Activated CD8-positive, alpha-beta T cell treated with anti-CD3 and anti-CD28 coated beads for 36 hours (primary cell): ENCODE measurements at regions of chr17 and their contacts with region 1.

Region 1: DNA sequence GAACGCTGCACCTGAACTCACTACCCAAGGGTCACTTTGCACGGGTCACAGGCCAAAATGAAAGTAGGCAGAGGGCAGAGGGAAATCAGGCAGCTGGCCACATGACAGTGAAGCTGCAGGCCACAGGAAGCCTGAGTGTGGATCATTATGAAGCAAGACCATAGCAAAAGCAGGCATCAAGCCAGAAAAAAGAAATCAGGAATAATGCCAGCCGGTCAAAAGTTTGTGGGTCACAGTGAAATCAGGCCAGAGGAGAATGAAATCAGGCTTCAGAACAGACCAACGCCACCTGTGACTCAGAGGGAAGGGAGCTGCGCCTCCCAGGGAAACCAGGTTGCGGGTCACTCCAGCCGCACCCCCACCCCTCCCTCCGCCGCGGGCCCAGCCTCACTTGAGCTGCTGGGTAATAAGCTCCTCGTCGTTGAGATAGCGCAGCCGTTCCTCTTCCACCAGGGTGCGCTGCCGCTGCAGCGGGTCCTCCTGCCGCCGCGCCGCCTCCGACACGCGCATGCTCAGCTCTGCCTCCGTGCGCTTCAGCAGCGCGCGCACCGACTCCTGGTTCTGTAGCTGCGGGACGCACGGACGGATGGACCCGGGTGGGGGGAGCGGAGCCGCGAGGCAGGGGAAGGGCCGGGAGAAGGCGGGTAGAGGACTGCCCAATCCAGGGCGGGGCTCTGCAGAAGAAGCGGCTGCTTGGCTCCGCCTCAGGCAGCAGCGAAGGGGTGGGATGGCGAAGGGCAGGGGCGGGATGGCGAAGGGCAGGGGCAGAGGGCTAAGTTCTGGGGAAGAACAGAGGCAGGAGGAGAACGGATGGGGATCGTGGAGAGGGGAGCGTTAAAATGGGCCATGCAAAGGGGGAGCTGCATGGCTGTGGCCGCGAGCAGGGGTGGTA is 47.7 kb downstream of the SRCIN1 start:
- DNase-seq: peak; percentile 92
- ATAC-seq: peak; percentile 87
- H3K4me3 Mint-ChIP-seq: peak overlapping the region; percentile 75
- H3K27ac Mint-ChIP-seq: no peak overlapping the region
- H3K4me1 Mint-ChIP-seq: peaks cover 25% of the 10 kb centered on the region
- H3K27me3 Mint-ChIP-seq: peaks cover 30% of the 10 kb centered on the region
- CTCF ChIP-seq: peak; percentile 89

Region 2: GRCh38 chr17:38326996-38327792 is 230.9 kb before region 1 on chr17:
- CTCF ChIA-PET with region 1: no interaction called
- POLR2A ChIA-PET with region 1: no interaction called
- intact Hi-C with region 1: no loop called
- DNase-seq: no peak
- ATAC-seq: peak; percentile 41
- H3K4me3 Mint-ChIP-seq: no peak overlapping the region
- H3K27ac Mint-ChIP-seq: no peak overlapping the region
- H3K4me1 Mint-ChIP-seq: peaks cover 7% of the 10 kb centered on the region
- H3K27me3 Mint-ChIP-seq: no peaks in the 10 kb centered on the region
- CTCF ChIP-seq: no peak

Region 3: GRCh38 chr17:38544839-38545209 is 13.3 kb before region 1 on chr17:
- CTCF ChIA-PET with region 1: interaction called, 28 read pairs
- POLR2A ChIA-PET with region 1: interaction called, 5 read pairs
- intact Hi-C with region 1: no loop called
- DNase-seq: no peak
- ATAC-seq: no peak
- H3K4me3 Mint-ChIP-seq: no peak overlapping the region
- H3K27ac Mint-ChIP-seq: no peak overlapping the region
- H3K4me1 Mint-ChIP-seq: no peaks in the 10 kb centered on the region
- H3K27me3 Mint-ChIP-seq: peaks cover 14% of the 10 kb centered on the region
- CTCF ChIP-seq: no peak

Region 4: DNA sequence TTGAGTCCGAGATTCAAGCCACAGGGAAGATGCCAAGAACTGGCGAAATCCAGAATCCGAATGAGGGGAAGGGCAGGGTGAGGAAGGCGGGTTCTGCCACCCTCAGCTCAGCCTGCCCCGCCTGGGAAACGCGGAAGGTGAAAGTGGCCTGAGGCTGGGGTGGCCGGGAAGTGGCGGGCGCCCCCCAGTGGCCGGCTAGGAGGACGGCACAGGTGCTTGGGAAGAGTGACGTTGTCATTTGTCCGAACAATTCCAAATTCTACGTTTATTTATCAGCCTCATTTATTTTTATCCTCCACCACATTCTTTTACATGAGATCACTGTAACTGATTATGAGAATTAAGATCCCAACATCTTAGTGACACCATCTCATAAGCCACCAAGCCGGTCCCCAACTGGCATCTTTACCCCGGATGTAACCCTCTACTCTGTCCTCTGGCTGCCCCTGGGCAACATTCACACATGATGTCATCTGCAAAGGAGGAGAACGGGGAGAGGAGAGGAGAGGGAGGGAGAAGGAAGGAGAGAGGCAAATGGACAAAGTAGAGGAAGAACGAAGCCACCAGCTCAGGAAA is 26.4 kb after region 1 on chr17:
- CTCF ChIA-PET with region 1: interaction called, 241 read pairs
- POLR2A ChIA-PET with region 1: no interaction called
- intact Hi-C with region 1: no loop called
- DNase-seq: peak; percentile 69
- ATAC-seq: peak; percentile 78
- H3K4me3 Mint-ChIP-seq: no peak overlapping the region
- H3K27ac Mint-ChIP-seq: no peak overlapping the region
- H3K4me1 Mint-ChIP-seq: peaks cover 4% of the 10 kb centered on the region
- H3K27me3 Mint-ChIP-seq: peaks cover 61% of the 10 kb centered on the region
- CTCF ChIP-seq: peak; percentile 99

Region 5: DNA sequence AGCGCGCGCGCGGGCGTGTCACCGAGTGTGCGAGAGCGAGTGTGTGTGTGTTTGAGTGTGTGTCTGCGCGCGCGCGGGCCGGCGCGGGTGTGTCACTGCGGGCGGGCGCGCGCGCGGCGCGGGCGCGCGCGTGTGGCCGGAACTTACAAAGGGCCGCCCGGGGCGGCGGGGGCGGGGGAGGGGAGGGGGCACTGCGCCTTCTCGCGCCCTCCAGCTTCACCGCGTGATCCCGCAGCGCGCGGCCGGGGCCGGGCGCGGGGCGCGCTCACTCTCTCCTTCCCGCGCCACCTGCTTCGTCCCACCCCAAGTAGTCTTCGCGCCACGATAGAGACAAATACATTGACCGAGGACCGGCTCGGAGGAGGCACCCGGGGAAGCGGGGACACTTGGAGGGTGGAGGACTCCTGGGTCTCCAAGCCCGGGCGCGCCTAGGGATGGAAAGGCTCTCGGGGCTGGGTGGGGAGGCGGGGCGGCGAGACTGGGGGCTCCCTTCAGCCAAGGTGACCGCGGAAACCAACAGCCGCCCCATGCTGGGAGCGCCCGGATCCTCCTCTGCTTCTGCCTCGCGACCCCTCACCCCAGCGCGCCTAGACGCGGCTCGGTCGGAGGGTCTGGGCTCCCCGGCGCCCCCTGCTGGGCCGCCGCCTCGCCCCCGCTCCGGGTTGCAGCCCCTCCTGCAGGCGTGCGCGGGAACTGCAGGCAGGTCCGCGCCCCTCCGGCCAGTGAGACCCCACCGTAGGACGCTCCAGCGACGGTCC is 48.0 kb after region 1 on chr17 and contains the start of gene SRCIN1:
- CTCF ChIA-PET with region 1: interaction called, 47 read pairs
- POLR2A ChIA-PET with region 1: no interaction called
- intact Hi-C with region 1: no loop called
- DNase-seq: peak; percentile 75
- ATAC-seq: peak; percentile 69
- H3K4me3 Mint-ChIP-seq: peak within 1 kb of the TSS; percentile 67
- H3K27ac Mint-ChIP-seq: no peak within 1 kb of the TSS
- H3K4me1 Mint-ChIP-seq: peaks cover 15% of the 10 kb centered on the region
- H3K27me3 Mint-ChIP-seq: peaks cover 56% of the 10 kb centered on the region
- CTCF ChIP-seq: peak; percentile 100
- total RNA-seq, gene SRCIN1: 0.74 to 1.1 TPM

Region 6: DNA sequence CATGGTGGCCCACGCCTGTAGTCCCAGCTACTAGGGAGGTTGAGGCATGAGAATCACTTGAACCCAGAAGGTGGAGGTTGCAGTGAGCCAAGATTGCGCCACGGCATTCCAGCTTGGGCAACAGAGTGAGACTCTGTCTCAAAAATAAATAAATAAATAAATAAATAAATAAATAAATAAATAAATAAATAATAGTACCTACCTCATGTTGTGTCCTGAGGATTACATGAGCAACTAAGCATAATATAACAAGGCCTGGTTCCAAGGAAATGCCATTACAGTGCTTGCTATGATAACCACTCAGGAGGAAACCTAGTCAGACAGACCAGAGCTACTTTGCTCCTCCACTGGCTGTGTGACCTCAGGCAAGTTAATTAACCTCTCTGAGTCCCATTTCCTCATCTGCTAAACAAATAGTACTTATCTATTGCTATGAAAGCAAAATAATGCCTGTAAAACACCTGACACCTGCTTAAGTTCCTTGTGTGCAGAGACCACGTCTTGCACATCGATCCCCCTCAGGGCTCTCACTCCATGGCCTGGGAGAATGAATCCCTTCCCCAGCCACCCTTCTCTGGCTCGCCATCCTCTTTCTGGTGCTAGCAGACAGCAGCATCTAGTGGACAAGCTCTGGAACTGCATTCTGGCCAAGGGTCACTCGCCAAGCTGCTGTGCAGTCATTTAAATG is 109.2 kb after region 1 on chr17:
- CTCF ChIA-PET with region 1: interaction called, 251 read pairs
- POLR2A ChIA-PET with region 1: interaction called, 7 read pairs
- intact Hi-C with region 1: loop called (anchors 10 kb)
- DNase-seq: peak; percentile 68
- ATAC-seq: peak; percentile 82
- H3K4me3 Mint-ChIP-seq: no peak overlapping the region
- H3K27ac Mint-ChIP-seq: no peak overlapping the region
- H3K4me1 Mint-ChIP-seq: peaks cover 15% of the 10 kb centered on the region
- H3K27me3 Mint-ChIP-seq: peaks cover 52% of the 10 kb centered on the region
- CTCF ChIP-seq: peak; percentile 98

Region 7: DNA sequence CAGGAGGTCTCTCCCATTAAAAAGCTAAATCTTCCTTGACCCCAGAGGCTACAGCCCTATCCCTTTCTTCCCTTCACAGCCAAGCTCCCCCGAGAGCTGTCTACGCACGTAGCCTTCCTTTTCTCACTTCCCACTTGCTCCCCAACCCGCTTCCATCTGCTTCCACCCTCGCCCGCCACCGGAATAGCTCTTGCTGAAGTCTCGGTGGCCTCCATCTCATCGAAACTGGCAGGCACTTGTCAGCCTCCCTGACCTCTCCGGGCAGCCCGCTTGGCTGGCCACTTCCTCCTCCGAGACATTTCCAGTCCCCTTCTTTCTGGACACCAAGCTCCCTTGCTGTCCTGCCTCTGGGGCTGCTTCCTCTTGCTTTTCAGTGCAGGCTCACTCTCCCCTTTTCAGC is 127.4 kb after region 1 on chr17:
- CTCF ChIA-PET with region 1: interaction called, 10 read pairs
- POLR2A ChIA-PET with region 1: no interaction called
- intact Hi-C with region 1: no loop called
- DNase-seq: no peak
- ATAC-seq: no peak
- H3K4me3 Mint-ChIP-seq: no peak overlapping the region
- H3K27ac Mint-ChIP-seq: no peak overlapping the region
- H3K4me1 Mint-ChIP-seq: peaks cover 3% of the 10 kb centered on the region
- H3K27me3 Mint-ChIP-seq: peaks cover 1% of the 10 kb centered on the region
- CTCF ChIP-seq: no peak

Region 8: GRCh38 chr17:38735161-38735997 is 177.3 kb after region 1 on chr17:
- CTCF ChIA-PET with region 1: interaction called, 27 read pairs
- POLR2A ChIA-PET with region 1: no interaction called
- intact Hi-C with region 1: no loop called
- DNase-seq: peak; percentile 82
- ATAC-seq: peak; percentile 34
- H3K4me3 Mint-ChIP-seq: no peak overlapping the region
- H3K27ac Mint-ChIP-seq: peak overlapping the region; percentile 55
- H3K4me1 Mint-ChIP-seq: peaks cover 45% of the 10 kb centered on the region
- H3K27me3 Mint-ChIP-seq: no peaks in the 10 kb centered on the region
- CTCF ChIP-seq: peak; percentile 90